Endothelial cell of umbilical vein (primary cell): ENCODE measurements at regions of chr5 and their contacts with region 1.

Region 1: DNA sequence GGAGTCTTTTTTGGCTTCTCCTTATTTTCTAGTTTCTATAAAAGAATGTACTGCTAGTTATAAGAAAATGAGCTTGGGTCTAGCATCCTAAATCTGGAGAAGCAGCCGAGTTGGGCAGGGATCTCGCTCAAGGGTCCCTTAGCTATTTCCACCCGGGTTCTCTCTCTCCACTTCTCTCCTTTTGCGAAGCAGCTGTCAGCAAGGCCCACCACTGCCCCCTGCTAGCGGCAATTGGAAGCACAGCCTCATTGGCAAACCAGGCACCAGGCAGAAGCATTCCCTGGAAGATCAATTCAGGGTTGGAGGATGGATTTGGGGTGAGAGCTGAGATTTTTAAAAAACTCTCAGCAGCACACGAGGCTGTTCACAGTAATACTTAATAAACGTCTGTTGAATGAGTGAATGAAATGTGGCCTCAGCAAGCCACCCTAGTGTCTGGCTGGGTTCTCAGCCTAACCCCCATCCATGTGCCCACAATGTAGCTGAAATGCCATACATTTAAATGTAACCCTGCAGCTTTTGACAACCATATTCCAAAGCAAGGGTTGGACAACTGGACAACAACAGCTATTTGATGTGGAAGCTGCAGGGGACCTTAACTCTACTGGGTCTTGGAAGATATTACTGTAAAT is 34.6 kb upstream of the TNIP1 start:
- DNase-seq: peak; percentile 64
- H3K4me3 ChIP-seq: no peak overlapping the region
- H3K27ac ChIP-seq: no peak overlapping the region
- H3K4me1 ChIP-seq: no peaks in the 10 kb centered on the region
- H3K27me3 ChIP-seq: no peaks in the 10 kb centered on the region
- CTCF ChIP-seq: peak; percentile 93 to 94
- POLR2A ChIP-seq: no peak

Region 2: DNA sequence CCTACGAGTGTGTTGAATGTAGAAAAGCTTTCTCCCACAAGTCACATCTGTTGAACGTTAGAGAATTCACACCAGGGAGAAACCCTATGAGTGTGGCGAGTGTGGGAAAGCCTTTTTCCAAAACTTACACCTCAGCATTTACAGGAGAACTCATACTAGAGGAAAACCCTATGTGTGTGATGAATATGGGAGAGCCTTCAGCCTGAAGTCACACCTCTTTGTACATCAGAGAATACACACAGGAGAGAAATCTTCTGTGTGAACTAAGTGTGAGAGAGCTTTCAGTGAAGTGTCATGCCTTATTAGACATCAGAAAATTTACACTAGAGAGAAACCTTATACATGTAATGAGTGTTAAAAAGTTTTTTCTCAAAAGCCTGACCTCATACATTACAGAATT is 136.8 kb before region 1 on chr5:
- CTCF ChIA-PET with region 1: no interaction called
- POLR2A ChIA-PET with region 1: no interaction called
- dilution Hi-C with region 1: no loop called
- intact Hi-C with region 1: no loop called
- DNase-seq: no peak
- H3K4me3 ChIP-seq: no peak overlapping the region
- H3K27ac ChIP-seq: no peak overlapping the region
- H3K4me1 ChIP-seq: no peaks in the 10 kb centered on the region
- H3K27me3 ChIP-seq: no peaks in the 10 kb centered on the region
- CTCF ChIP-seq: no peak
- POLR2A ChIP-seq: no peak

Region 3: GRCh38 chr5:151008906-151009305 is 106.5 kb before region 1 on chr5:
- CTCF ChIA-PET with region 1: interaction called, 215 read pairs
- POLR2A ChIA-PET with region 1: no interaction called
- dilution Hi-C with region 1: no loop called
- intact Hi-C with region 1: no loop called
- DNase-seq: no peak
- H3K4me3 ChIP-seq: no peak overlapping the region
- H3K27ac ChIP-seq: no peak overlapping the region
- H3K4me1 ChIP-seq: no peaks in the 10 kb centered on the region
- H3K27me3 ChIP-seq: peaks cover 0 to 8% of the 10 kb centered on the region in 2 experiments
- CTCF ChIP-seq: no peak
- POLR2A ChIP-seq: no peak

Region 4: GRCh38 chr5:151068433-151069197 is 46.8 kb before region 1 on chr5:
- CTCF ChIA-PET with region 1: interaction called, 45 read pairs
- POLR2A ChIA-PET with region 1: no interaction called
- dilution Hi-C with region 1: no loop called
- intact Hi-C with region 1: no loop called
- DNase-seq: no peak
- H3K4me3 ChIP-seq: no peak overlapping the region
- H3K27ac ChIP-seq: peak overlapping the region; percentile 52
- H3K4me1 ChIP-seq: peaks cover 27% of the 10 kb centered on the region
- H3K27me3 ChIP-seq: no peaks in the 10 kb centered on the region
- CTCF ChIP-seq: no peak
- POLR2A ChIP-seq: no peak

Region 5: DNA sequence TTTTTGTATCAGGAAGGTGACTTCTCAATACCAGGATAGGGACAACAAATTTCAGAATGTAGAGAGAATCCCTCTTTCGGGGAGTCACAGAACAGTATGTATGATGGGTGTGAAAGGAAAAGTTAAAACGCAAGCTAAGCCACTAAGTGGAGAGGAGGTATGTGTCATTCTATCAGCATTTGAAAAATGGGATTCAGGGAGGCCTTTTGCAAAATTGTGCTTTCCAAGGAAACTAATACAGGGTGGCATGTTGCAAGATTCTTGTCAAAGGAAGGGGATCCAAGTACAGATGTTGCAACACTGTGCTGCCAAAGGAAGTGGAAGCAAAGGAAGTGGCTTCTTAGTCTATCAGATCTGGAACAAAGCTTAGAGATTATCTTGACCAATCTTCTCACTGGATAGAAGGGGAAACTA is 21.9 kb before region 1 on chr5:
- CTCF ChIA-PET with region 1: interaction called, 22 read pairs
- POLR2A ChIA-PET with region 1: no interaction called
- dilution Hi-C with region 1: no loop called
- intact Hi-C with region 1: no loop called
- DNase-seq: no peak
- H3K4me3 ChIP-seq: no peak overlapping the region
- H3K27ac ChIP-seq: peak overlapping the region; percentile 67
- H3K4me1 ChIP-seq: peaks cover 52% of the 10 kb centered on the region
- H3K27me3 ChIP-seq: no peaks in the 10 kb centered on the region
- CTCF ChIP-seq: no peak
- POLR2A ChIP-seq: no peak

Region 6: DNA sequence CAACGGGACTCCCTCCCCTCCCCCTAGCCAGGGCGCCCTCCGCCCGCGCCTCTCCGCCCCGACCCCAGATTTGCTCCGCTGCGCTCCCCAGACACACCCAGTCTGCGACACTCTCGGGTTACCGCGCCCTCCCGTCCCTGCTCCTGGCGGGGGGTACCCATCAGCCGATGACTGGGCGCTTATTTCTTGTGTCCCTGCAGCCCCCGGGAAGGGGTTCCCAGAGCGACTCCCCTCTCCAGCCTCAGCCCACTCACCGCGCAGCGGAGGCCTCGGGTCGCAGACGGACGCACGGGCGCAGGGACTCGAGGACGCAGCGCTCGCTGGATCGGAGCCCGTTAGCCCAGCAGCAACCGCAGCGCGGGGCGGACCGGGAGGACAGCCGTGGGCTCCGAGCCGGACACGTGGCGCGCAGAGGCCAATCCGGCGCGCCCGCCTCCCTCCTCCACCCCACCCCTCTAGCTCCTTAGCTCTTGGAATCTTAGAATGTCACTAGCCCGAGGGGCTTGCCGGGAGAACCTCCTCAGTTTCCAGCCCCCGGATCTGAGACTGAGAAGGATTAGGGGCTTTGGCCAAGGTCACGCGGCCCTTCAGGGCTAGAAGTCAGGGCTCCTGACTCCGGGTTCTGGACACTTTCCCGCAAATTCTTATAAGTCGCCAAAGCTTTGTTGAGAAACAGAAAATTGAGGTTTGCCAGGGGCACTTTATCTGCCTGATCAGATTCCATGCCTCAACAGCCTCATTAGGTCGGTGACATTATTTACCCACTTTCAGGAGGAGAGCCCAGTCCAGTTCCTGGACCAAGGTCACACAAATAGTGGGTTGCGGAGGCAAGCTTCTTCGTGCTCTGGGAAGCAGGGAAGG is 42.3 kb after region 1 on chr5 and contains the start of gene ANXA6:
- CTCF ChIA-PET with region 1: interaction called, 51 read pairs
- POLR2A ChIA-PET with region 1: no interaction called
- dilution Hi-C with region 1: no loop called
- intact Hi-C with region 1: no loop called
- DNase-seq: peak; percentile 83
- H3K4me3 ChIP-seq: peak within 1 kb of the TSS; percentile 73 to 92 (median 81)
- H3K27ac ChIP-seq: peak within 1 kb of the TSS; percentile 37
- H3K4me1 ChIP-seq: peaks cover 25% of the 10 kb centered on the region
- H3K27me3 ChIP-seq: no peaks in the 10 kb centered on the region
- CTCF ChIP-seq: no peak
- POLR2A ChIP-seq: no peak
- total RNA-seq, gene ANXA6: 240 and 266 TPM in 2 replicates